Activated CD4-positive, alpha-beta memory T cell treated with anti-CD3 and anti-CD28 coated beads for 36 hours (primary cell): ENCODE measurements at regions of chr20 and their contacts with region 1.

Region 1: DNA sequence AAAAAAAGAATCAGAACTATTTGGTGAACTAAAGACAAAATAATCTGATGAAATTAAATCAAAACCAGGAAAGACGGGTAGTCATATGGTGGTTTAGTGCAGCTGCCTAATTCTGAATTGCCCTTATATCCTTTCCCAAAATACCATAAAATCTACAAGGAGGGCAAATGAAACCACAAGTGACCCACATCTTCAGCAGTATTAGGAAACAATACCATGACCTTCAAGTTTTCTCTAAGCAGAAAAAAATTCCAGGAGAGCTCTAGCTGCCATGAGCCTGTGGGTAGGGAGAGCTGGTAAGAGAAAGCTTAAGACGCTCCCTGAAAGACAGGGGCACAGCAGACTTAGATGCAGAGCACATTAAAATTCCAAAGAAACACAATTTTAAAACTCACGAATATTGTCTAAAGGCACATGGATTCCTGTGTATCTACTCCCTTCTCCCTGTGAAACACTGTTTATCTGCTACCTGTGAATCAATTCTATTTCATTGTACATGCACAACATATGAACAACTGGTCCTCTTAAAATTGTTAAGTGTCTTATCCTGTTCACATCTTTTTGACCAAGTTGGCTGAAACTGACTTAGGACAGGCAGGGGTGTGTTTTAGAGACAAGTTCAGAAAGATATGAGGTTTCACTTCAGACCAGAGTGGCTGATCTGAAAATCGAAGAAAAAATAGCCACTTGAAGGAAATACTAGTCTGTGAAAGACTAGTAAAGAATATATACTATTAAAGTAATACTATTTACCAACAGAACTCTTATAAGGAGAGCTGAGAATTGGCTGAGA is 153.6 kb upstream of the SHLD1 start:
- DNase-seq: no peak
- H3K4me3 Mint-ChIP-seq: no peak overlapping the region
- H3K27ac Mint-ChIP-seq: peak overlapping the region; percentile 66
- H3K4me1 Mint-ChIP-seq: peaks cover 66% of the 10 kb centered on the region
- H3K27me3 Mint-ChIP-seq: no peaks in the 10 kb centered on the region

Region 2: GRCh38 chr20:5608442-5609161 is 12.0 kb after region 1 on chr20:
- CTCF ChIA-PET with region 1: no interaction called
- POLR2A ChIA-PET with region 1: interaction called, 4 read pairs
- intact Hi-C with region 1: loop called (anchors 1 kb)
- DNase-seq: no peak
- H3K4me3 Mint-ChIP-seq: peak overlapping the region; percentile 87
- H3K27ac Mint-ChIP-seq: peak overlapping the region; percentile 98
- H3K4me1 Mint-ChIP-seq: peaks cover 52% of the 10 kb centered on the region
- H3K27me3 Mint-ChIP-seq: no peaks in the 10 kb centered on the region